SK-N-SH (cell line): ENCODE measurements at regions of chr19 and their contacts with region 1.

Region 1: DNA sequence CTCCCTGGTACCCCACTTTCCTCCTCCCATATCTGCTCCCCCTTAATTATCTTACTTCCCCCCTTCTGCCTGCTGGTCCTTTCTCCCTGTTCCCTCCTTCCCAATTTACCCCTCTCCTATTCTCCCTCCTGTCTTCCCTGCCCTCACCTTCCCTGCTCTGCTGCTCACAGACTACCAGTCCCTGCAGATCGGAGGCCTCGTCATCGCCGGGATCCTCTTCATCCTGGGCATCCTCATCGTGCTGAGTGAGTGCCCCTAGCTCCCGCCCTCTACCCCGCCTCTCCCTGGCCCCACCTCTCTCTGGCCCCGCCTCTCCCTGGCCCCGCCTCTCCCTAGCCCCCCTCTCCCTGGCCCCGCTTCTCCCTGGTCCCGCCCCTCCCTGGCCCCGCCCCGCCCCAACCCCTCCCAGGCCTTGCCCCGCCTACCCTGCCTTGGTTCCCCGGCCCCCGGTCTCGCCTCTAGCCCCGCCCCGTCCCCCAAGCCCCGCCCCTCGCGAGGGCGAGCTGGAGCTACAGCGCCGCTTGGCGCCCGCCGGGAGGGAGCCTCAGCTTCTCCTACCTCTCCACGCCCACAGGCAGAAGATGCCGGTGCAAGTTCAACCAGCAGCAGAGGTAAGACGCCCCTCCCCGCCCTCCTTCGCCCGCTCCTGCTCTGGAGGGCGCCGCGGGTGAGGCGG is 2.0 kb upstream of the FXYD7 start:
- DNase-seq: peak; percentile 100
- H3K4me3 ChIP-seq: peak overlapping the region in 1 of 2 experiments; percentile 41; a peak in 2 of 4 replicates
- H3K27ac ChIP-seq: no peak overlapping the region
- H3K4me1 ChIP-seq: peaks cover 0 to 25% of the 10 kb centered on the region in 2 experiments; a peak in 2 of 4 replicates
- H3K27me3 ChIP-seq: peaks cover 41% of the 10 kb centered on the region; the same call in 1 of the 2 replicates
- CTCF ChIP-seq: peak; percentile 47
- EP300 ChIP-seq: no peak
- RAD21 ChIP-seq: peak; percentile 48

Region 2: GRCh38 chr19:35114353-35115176 is 26.5 kb before region 1 on chr19:
- CTCF ChIA-PET with region 1: interaction called, 66 read pairs
- POLR2A ChIA-PET with region 1: no interaction called
- DNase-seq: peak; percentile 92
- H3K4me3 ChIP-seq: peak overlapping the region in 1 of 2 experiments; percentile 44; a peak in 1 of 4 replicates
- H3K27ac ChIP-seq: no peak overlapping the region
- H3K4me1 ChIP-seq: peaks cover 0 to 8% of the 10 kb centered on the region in 2 experiments; a peak in 1 of 4 replicates
- H3K27me3 ChIP-seq: no peaks in the 10 kb centered on the region; the same call in 1 of the 2 replicates
- CTCF ChIP-seq: peak; percentile 96
- EP300 ChIP-seq: no peak
- RAD21 ChIP-seq: peak; percentile 70

Region 3: GRCh38 chr19:35124098-35125060 is 16.7 kb before region 1 on chr19:
- CTCF ChIA-PET with region 1: interaction called, 60 read pairs
- POLR2A ChIA-PET with region 1: no interaction called
- DNase-seq: peak; percentile 98
- H3K4me3 ChIP-seq: peak overlapping the region; percentile 57 to 65
- H3K27ac ChIP-seq: peak overlapping the region in 1 of 2 experiments; percentile 71; a peak in 1 of 4 replicates
- H3K4me1 ChIP-seq: peaks cover 0 to 8% of the 10 kb centered on the region in 2 experiments; a peak in 1 of 4 replicates
- H3K27me3 ChIP-seq: no peaks in the 10 kb centered on the region; the same call in 1 of the 2 replicates
- CTCF ChIP-seq: no peak
- EP300 ChIP-seq: no peak
- RAD21 ChIP-seq: no peak

Region 4: GRCh38 chr19:35154525-35155406 is 13.7 kb after region 1 on chr19 and contains the start of gene FXYD5:
- CTCF ChIA-PET with region 1: interaction called, 59 read pairs
- POLR2A ChIA-PET with region 1: no interaction called
- DNase-seq: peak; percentile 60
- H3K4me3 ChIP-seq: peak within 1 kb of the TSS; percentile 62 to 90
- H3K27ac ChIP-seq: peak within 1 kb of the TSS in 1 of 2 experiments; percentile 57; a peak in 2 of 4 replicates
- H3K4me1 ChIP-seq: peaks cover 0 to 3% of the 10 kb centered on the region in 2 experiments; a peak in 2 of 4 replicates
- H3K27me3 ChIP-seq: no peaks in the 10 kb centered on the region
- CTCF ChIP-seq: no peak; the same call in 1 of the 2 replicates
- EP300 ChIP-seq: no peak
- RAD21 ChIP-seq: no peak
- polyA plus RNA-seq, gene FXYD5: 107 and 195 TPM in 2 replicates

Region 5: GRCh38 chr19:35184884-35185283 is 43.8 kb after region 1 on chr19:
- CTCF ChIA-PET with region 1: no interaction called
- POLR2A ChIA-PET with region 1: no interaction called
- DNase-seq: no peak
- H3K4me3 ChIP-seq: no peak overlapping the region
- H3K27ac ChIP-seq: no peak overlapping the region
- H3K4me1 ChIP-seq: no peaks in the 10 kb centered on the region
- H3K27me3 ChIP-seq: peaks cover 6% of the 10 kb centered on the region; the same call in 1 of the 2 replicates
- CTCF ChIP-seq: no peak
- EP300 ChIP-seq: no peak
- RAD21 ChIP-seq: no peak

Region 6: GRCh38 chr19:35205733-35206323 is 64.7 kb after region 1 on chr19:
- CTCF ChIA-PET with region 1: no interaction called
- POLR2A ChIA-PET with region 1: no interaction called
- DNase-seq: no peak
- H3K4me3 ChIP-seq: no peak overlapping the region
- H3K27ac ChIP-seq: no peak overlapping the region
- H3K4me1 ChIP-seq: no peaks in the 10 kb centered on the region
- H3K27me3 ChIP-seq: peaks cover 23% of the 10 kb centered on the region; the same call in 1 of the 2 replicates
- CTCF ChIP-seq: no peak
- EP300 ChIP-seq: no peak
- RAD21 ChIP-seq: no peak

Region 7: DNA sequence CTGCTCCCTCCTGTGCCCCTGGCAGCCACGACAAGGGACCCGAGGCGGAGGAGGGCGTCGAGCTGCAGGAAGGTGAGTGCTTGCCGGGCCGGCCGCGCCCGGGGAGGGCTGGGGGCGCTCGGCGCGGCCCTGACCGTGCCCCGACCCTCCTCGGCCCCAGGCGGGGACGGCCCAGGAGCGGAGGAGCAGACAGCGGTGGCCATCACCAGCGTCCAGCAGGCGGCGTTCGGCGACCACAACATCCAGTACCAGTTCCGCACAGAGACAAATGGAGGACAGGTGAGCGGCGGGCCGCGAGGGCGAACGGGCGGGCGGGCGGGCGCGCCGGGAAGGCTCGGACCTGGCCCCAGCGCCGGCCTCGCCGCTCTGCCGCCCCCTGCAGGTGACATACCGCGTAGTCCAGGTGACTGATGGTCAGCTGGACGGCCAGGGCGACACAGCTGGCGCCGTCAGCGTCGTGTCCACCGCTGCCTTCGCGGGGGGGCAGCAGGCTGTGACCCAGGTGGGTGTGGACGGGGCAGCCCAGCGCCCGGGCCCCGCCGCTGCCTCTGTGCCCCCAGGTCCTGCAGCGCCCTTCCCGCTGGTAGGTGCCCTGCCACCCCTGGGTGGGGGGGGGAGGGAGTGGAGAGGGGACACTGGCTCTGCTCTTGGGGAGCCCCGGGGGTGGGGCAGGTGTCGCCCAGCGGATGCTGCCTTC is 128.5 kb after region 1 on chr19:
- CTCF ChIA-PET with region 1: interaction called, 15 read pairs
- POLR2A ChIA-PET with region 1: interaction called, 3 read pairs
- DNase-seq: peak; percentile 89
- H3K4me3 ChIP-seq: peak overlapping the region; percentile 61 to 87; a peak in 3 of 4 replicates
- H3K27ac ChIP-seq: peak overlapping the region in 1 of 2 experiments; percentile 92; a peak in 2 of 4 replicates
- H3K4me1 ChIP-seq: peaks cover 4 to 15% of the 10 kb centered on the region in 2 experiments; a peak in 1 of 4 replicates
- H3K27me3 ChIP-seq: no peaks in the 10 kb centered on the region
- CTCF ChIP-seq: peak; percentile 45; the same call in 1 of the 2 replicates
- EP300 ChIP-seq: no peak
- RAD21 ChIP-seq: peak; percentile 50